Transverse colon (tissue), 4 donors: ENCODE measurements at regions of chr5 and their contacts with region 1.

Region 1: DNA sequence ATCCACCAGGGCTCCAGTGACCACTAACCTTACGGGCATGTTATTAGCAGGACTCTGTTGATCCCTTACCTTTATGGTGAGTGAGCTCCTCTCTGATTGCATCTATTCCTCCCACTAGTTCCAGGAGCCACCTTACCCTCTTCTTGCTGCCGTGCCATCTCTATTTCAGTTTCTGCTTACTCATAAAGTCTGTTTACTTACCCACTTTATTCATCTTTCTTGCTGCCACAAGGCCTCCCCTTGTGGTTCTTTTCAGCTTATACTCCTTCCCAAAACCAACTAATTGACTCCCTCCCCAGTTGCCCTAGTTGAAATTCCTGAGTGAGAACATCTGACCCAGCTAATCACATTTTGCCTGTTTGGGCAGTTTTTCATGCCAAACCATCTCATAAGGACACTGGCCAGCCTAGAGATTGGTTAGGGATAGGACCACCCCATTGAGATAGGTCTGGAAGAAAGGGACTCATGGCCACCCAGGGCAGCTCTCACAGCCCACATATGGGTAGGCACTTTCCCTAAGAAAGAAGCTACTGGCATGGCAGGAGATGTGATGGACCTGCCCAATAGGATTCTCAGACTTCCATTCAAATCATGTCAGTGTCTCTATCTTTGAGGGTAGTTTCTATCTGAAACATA is 412.7 kb downstream of the EFNA5 start:
- DNase-seq: no peak
- H3K4me3 ChIP-seq: no peak overlapping the region
- H3K27ac ChIP-seq: no peak overlapping the region
- H3K4me1 ChIP-seq: peaks cover 0 to 3% (median 2%) of the 10 kb centered on the region in 4 donors
- H3K27me3 ChIP-seq: no peaks in the 10 kb centered on the region
- CTCF ChIP-seq: no peak
- EP300 ChIP-seq: no peak
- POLR2A ChIP-seq: no peak

Region 2: GRCh38 chr5:107290780-107291398 is 32.9 kb after region 1 on chr5:
- in situ Hi-C with region 1: no loop called
- intact Hi-C with region 1: loop called (anchors 1 kb)
- DNase-seq: no peak
- H3K4me3 ChIP-seq: no peak overlapping the region
- H3K27ac ChIP-seq: no peak overlapping the region
- H3K4me1 ChIP-seq: no peaks in the 10 kb centered on the region
- H3K27me3 ChIP-seq: no peaks in the 10 kb centered on the region
- CTCF ChIP-seq: no peak
- EP300 ChIP-seq: no peak
- POLR2A ChIP-seq: no peak